ENCODE measurements at regions of chr11 and their contacts with region 1.

Region 1: DNA sequence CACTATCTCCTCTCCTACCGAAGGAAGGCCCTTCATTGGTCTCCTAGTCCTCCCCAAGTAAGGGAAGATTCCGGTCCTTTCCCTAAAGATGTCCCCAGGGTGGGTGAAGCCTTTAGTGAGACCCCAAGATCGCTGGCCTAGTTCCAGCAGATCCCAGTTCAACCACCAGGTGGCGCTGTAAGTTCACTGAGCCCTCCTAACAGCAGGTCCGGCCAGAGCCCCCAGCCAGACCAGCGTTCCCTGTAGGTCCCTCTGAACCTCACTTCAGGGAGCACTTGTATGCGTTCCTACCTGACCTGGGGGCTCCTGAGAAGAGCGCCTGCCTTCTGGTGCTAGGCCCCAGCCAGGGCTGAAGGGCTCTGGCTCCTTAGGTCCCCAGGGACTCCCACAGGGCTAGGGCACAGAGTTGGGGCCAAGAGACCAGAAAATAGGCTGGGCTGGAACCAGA is 38.1 kb downstream of the LMO1 start:
- DNase-seq: peak; percentile 42
- ATAC-seq: peak; percentile 88
- H3K4me3 ChIP-seq: no peak overlapping the region
- H3K27ac ChIP-seq: no peak overlapping the region
- H3K4me1 ChIP-seq: peaks cover 0 to 3% of the 10 kb centered on the region in 2 experiments; a peak in 1 of 4 replicates
- H3K27me3 ChIP-seq: no peaks in the 10 kb centered on the region
- CTCF ChIP-seq: peak; percentile 89 to 95 (median 92)
- POLR2A ChIP-seq: no peak
- RAD21 ChIP-seq: peak; percentile 96

Region 2: DNA sequence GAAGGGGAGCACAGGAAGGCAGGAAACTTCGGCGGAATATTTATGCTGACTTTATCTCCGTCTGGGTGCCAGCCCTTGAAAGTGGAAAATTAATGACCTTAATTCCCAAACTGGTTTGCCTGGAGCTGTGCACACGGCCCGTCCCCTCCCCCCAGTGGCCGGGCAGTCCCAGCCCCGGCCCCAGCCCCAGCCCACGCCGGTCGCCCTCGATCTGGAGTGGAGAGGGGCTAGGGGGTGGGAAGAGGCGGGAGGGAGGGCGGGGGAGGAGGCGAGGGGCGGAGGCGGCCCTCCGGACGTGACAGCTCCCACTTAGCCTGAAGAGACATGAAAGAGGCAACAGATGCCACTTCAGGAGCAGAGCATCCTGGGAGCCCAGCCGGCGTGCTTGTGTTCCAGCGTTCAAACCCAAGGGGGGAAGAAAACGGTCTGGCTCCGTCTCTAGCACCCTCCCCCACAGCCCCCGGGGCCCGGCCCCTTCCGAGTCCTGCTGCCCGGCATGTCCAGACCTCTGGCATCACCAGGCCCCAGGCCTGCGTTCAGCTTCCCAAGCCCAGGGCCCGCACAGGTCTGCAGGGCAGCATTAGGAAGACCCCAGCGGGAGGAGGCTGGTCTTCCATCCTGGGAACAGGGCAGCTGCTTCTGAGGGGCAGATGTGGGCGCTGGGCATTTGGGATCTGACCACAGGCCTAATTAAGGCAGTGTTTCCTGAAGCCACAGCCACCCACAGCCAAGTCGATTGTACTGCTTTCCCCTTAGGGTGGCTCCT is 58.0 kb after region 1 on chr11:
- CTCF ChIA-PET with region 1: no interaction called
- POLR2A ChIA-PET with region 1: no interaction called
- RAD21 ChIA-PET with region 1: no interaction called
- intact Hi-C with region 1: no loop called
- DNase-seq: no peak
- ATAC-seq: no peak
- H3K4me3 ChIP-seq: no peak overlapping the region
- H3K27ac ChIP-seq: no peak overlapping the region
- H3K4me1 ChIP-seq: peaks cover 0 to 4% of the 10 kb centered on the region in 2 experiments; a peak in 1 of 4 replicates
- H3K27me3 ChIP-seq: no peaks in the 10 kb centered on the region
- CTCF ChIP-seq: no peak
- POLR2A ChIP-seq: no peak
- RAD21 ChIP-seq: no peak

Region 3: GRCh38 chr11:8309862-8310261 is 84.2 kb after region 1 on chr11:
- CTCF ChIA-PET with region 1: no interaction called
- POLR2A ChIA-PET with region 1: no interaction called
- RAD21 ChIA-PET with region 1: no interaction called
- intact Hi-C with region 1: loop called (anchors 1 kb)
- DNase-seq: no peak
- ATAC-seq: peak; percentile 69
- H3K4me3 ChIP-seq: no peak overlapping the region
- H3K27ac ChIP-seq: no peak overlapping the region
- H3K4me1 ChIP-seq: no peaks in the 10 kb centered on the region
- H3K27me3 ChIP-seq: no peaks in the 10 kb centered on the region
- CTCF ChIP-seq: peak; percentile 29 to 34 (median 34); a peak in 4 of 6 replicates
- POLR2A ChIP-seq: no peak
- RAD21 ChIP-seq: peak; percentile 66